ENCODE measurements at regions of chr11 and their contacts with region 1.

Region 1: DNA sequence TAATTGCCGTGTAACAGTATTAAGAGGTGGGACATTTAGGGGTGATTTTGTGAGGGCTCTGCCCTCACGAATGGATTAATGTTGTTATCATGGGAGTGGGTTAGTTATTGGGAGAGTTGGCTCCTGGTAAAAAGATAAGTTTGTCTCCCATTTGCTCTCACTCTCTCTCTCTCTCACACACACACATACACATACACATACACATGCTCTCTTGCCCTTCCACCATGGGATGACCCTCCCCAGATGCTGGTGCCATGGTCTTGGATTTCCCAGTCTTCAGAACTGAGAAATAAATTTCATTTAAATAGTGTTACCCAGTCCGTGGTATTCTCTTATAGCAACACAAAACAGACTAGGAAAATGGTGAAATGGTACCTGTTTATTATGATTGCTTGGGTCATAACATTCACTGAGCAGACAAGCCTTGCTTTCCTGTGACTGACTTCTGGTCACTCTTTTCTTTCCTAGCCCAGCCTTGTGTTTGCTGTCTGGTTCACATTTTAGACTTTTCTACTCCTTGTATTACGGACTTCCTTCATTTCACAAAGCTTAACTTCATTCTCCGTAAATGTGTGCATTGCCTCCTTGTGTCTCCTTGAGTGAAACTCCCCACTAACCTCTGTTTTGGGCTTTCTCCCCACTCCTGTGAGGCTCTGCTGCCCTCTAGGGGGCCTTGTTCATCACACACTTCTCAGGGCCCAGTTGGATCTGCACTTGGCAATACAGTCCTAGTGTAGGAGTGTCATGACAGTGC is 206.5 kb upstream of the CTSC start:
- DNase-seq: peak; percentile 95
- H3K4me3 ChIP-seq: no peak overlapping the region
- H3K27ac ChIP-seq: no peak overlapping the region
- H3K4me1 ChIP-seq: peaks cover 3% of the 10 kb centered on the region
- H3K27me3 ChIP-seq: no peaks in the 10 kb centered on the region
- CTCF ChIP-seq: peak; percentile 85 to 98
- POLR2A ChIP-seq: no peak

Region 2: GRCh38 chr11:87421422-87421821 is 1122.7 kb before region 1 on chr11:
- CTCF ChIA-PET with region 1: interaction called, 3 read pairs
- POLR2A ChIA-PET with region 1: no interaction called
- dilution Hi-C with region 1: no loop called
- intact Hi-C with region 1: loop called (anchors 10 kb)
- DNase-seq: peak; percentile 91
- H3K4me3 ChIP-seq: no peak overlapping the region
- H3K27ac ChIP-seq: no peak overlapping the region
- H3K4me1 ChIP-seq: peaks cover 16% of the 10 kb centered on the region
- H3K27me3 ChIP-seq: no peaks in the 10 kb centered on the region
- CTCF ChIP-seq: peak; percentile 67 to 75
- POLR2A ChIP-seq: no peak

Region 3: GRCh38 chr11:88016392-88017170 is 527.5 kb before region 1 on chr11:
- CTCF ChIA-PET with region 1: interaction called, 226 read pairs
- POLR2A ChIA-PET with region 1: no interaction called
- dilution Hi-C with region 1: no loop called
- intact Hi-C with region 1: loop called (anchors 1 kb)
- DNase-seq: peak; percentile 84
- H3K4me3 ChIP-seq: no peak overlapping the region
- H3K27ac ChIP-seq: no peak overlapping the region
- H3K4me1 ChIP-seq: no peaks in the 10 kb centered on the region
- H3K27me3 ChIP-seq: no peaks in the 10 kb centered on the region
- CTCF ChIP-seq: peak; percentile 58 to 68
- POLR2A ChIP-seq: no peak

Region 4: DNA sequence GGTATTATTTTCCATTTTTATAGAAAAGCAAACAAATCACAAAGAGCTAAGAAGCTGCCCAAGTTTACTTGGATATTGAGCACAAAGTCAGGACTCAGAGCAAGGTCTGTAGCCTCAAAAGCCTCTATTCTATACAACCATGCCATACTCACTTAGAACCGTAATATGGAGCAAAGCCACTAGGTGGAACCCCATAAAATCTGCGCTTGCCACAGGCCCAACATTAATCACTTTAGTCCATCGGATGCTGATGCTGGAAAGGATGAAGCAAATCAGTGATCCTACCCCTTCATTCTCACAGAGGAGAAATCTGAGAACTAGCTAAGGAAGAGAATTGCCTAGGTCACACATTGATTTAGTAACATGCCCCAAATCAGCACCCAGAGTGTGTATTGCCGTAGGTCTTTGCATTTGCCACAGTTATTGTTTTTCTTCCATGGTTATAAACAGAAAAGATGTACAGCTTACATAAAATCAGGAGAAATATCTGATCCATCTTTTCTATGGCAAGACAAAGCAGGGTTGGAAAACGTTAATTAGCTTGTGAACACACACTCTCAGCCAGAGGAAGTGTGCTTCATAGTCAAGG is 312.1 kb before region 1 on chr11:
- CTCF ChIA-PET with region 1: interaction called, 85 read pairs
- POLR2A ChIA-PET with region 1: no interaction called
- dilution Hi-C with region 1: no loop called
- intact Hi-C with region 1: loop called (anchors 1 kb)
- DNase-seq: peak; percentile 59
- H3K4me3 ChIP-seq: no peak overlapping the region
- H3K27ac ChIP-seq: no peak overlapping the region
- H3K4me1 ChIP-seq: no peaks in the 10 kb centered on the region
- H3K27me3 ChIP-seq: no peaks in the 10 kb centered on the region
- CTCF ChIP-seq: peak; percentile 48 to 63
- POLR2A ChIP-seq: no peak

Region 5: DNA sequence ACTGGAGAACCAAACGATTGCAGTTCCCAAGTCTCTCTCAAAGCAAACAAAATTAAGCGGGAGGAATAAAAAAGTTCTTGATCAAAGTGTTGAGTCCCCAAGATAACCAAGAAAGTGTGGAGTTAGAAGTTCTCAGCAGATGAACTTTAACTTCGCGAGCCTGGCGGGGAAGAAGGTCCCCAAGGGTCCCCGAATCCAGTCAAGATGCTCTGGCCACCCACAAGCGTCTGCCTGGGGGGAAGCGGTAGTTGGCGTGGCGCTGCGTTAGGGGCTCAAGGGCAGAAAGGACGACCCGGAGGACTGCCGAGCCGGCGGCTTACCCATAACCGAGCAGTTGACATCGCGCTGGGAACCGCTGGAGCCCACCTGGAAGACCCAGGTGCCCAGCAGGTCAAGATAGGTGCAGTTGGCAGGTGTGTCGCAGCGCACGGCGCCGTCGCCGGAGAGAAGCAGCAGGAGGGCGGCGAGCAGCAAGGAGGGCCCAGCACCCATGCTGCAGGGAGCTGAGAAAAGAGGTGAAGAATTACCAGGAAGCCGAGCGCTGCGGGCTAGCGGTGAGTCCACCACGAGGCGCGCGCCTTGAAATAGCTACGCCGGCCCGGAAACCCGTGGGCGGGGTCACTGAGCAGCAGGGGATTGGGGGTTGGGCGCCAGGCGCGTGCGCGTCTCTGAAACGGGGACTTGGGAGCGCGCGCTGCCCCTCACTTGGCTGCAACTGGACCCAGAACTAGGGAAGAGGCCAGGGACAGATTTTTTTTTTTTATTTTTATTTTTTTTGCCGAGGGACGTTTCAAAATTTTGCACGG is 206.7 kb before region 1 on chr11 and contains the start of gene CTSC:
- CTCF ChIA-PET with region 1: interaction called, 21 read pairs
- POLR2A ChIA-PET with region 1: no interaction called
- dilution Hi-C with region 1: no loop called
- intact Hi-C with region 1: loop called (anchors 2 kb)
- DNase-seq: peak; percentile 85
- H3K4me3 ChIP-seq: peak within 1 kb of the TSS; percentile 92 to 99 (median 95)
- H3K27ac ChIP-seq: peak within 1 kb of the TSS; percentile 78
- H3K4me1 ChIP-seq: peaks cover 27% of the 10 kb centered on the region
- H3K27me3 ChIP-seq: no peaks in the 10 kb centered on the region
- CTCF ChIP-seq: no peak
- POLR2A ChIP-seq: peak; percentile 96
- total RNA-seq, gene CTSC: 130 and 226 TPM in 2 replicates

Region 6: DNA sequence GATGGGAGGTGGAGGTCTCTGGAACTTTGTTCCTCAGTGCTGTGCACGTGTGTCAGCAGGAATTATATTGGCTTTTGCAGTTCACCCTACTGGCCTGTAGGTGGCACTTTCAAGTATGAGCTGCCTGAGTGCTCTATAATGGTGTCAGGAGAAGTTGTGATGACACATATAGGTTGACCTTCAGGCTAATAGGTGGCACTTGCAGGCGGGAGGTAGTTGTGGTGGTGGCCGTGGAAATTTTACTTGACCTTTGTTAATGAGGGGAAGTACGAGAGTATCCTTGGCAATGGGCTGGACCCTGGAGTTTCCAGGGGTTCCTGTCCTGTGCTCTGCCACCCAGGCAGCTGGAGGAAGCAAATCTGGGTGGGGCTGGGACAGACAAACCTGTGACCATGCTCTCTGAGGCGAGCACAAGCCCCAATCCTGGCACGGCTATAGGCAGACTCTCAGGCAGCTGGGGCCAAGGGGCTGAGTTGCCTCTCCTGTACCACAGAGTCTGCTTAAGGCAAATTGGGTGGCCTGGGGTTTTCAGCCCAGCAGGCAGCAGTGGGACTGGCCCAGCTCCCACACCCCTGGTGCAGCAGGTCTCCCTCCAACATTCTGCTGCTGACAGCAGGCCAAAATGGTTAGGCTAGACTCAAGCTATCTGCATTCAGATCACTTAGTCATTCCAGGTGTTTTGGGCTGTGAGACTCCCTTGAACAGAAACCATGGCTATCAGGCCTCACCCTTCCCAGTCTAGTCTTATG is 59.0 kb before region 1 on chr11:
- CTCF ChIA-PET with region 1: interaction called, 52 read pairs
- POLR2A ChIA-PET with region 1: no interaction called
- dilution Hi-C with region 1: no loop called
- intact Hi-C with region 1: loop called (anchors 1 kb)
- DNase-seq: peak; percentile 37
- H3K4me3 ChIP-seq: no peak overlapping the region
- H3K27ac ChIP-seq: no peak overlapping the region
- H3K4me1 ChIP-seq: no peaks in the 10 kb centered on the region
- H3K27me3 ChIP-seq: no peaks in the 10 kb centered on the region
- CTCF ChIP-seq: peak; percentile 64 to 73
- POLR2A ChIP-seq: no peak

Region 7: GRCh38 chr11:88799771-88800500 is 255.9 kb after region 1 on chr11:
- CTCF ChIA-PET with region 1: no interaction called
- POLR2A ChIA-PET with region 1: no interaction called
- dilution Hi-C with region 1: no loop called
- intact Hi-C with region 1: no loop called
- DNase-seq: no peak
- H3K4me3 ChIP-seq: no peak overlapping the region
- H3K27ac ChIP-seq: no peak overlapping the region
- H3K4me1 ChIP-seq: no peaks in the 10 kb centered on the region
- H3K27me3 ChIP-seq: no peaks in the 10 kb centered on the region
- CTCF ChIP-seq: no peak
- POLR2A ChIP-seq: no peak

Region 8: DNA sequence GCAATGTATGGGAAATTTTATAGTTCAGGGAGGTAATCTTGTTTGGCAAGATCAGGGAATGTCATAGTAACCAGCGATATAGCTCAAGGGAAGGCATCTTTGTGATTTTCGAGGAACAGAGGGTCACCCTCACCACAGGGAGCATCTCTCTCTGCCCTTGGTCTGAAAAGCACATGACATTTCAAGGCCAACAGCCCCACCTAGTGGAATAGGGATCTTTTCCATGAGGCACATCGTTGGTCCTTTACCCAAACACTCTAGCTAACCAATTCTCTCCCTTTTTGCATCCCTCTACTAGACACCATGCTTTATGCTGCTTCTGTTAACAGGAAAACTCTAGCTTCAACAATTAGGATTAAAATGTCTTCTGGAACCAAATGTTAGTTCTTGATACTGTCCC is 342.7 kb after region 1 on chr11:
- CTCF ChIA-PET with region 1: interaction called, 3 read pairs
- POLR2A ChIA-PET with region 1: no interaction called
- dilution Hi-C with region 1: no loop called
- intact Hi-C with region 1: loop called (anchors 2 kb)
- DNase-seq: peak; percentile 39
- H3K4me3 ChIP-seq: no peak overlapping the region
- H3K27ac ChIP-seq: no peak overlapping the region
- H3K4me1 ChIP-seq: no peaks in the 10 kb centered on the region
- H3K27me3 ChIP-seq: no peaks in the 10 kb centered on the region
- CTCF ChIP-seq: peak; percentile 33 to 43
- POLR2A ChIP-seq: no peak